MCF 10A (cell line): ENCODE measurements at regions of chr22 and their contacts with region 1.

Region 1: GRCh38 chr22:40177738-40178416 is at the start of gene TNRC6B:
- DNase-seq: peak; percentile 98
- H3K4me3 Mint-ChIP-seq: peak within 1 kb of the TSS; percentile 67
- H3K27ac Mint-ChIP-seq: peak within 1 kb of the TSS; percentile 80
- H3K4me1 Mint-ChIP-seq: peaks cover 35% of the 10 kb centered on the region
- H3K27me3 Mint-ChIP-seq: no peaks in the 10 kb centered on the region
- CTCF ChIP-seq: no peak
- total RNA-seq, gene TNRC6B: 27.1 and 39.3 TPM in 2 replicates

Region 2: GRCh38 chr22:40009292-40009769 is 168.5 kb before region 1 on chr22:
- CTCF ChIA-PET with region 1: no interaction called
- POLR2A ChIA-PET with region 1: no interaction called
- intact Hi-C with region 1: no loop called
- DNase-seq: no peak
- H3K4me3 Mint-ChIP-seq: peak overlapping the region; percentile 10
- H3K27ac Mint-ChIP-seq: peak overlapping the region; percentile 59
- H3K4me1 Mint-ChIP-seq: peaks cover 35% of the 10 kb centered on the region
- H3K27me3 Mint-ChIP-seq: no peaks in the 10 kb centered on the region
- CTCF ChIP-seq: no peak

Region 3: DNA sequence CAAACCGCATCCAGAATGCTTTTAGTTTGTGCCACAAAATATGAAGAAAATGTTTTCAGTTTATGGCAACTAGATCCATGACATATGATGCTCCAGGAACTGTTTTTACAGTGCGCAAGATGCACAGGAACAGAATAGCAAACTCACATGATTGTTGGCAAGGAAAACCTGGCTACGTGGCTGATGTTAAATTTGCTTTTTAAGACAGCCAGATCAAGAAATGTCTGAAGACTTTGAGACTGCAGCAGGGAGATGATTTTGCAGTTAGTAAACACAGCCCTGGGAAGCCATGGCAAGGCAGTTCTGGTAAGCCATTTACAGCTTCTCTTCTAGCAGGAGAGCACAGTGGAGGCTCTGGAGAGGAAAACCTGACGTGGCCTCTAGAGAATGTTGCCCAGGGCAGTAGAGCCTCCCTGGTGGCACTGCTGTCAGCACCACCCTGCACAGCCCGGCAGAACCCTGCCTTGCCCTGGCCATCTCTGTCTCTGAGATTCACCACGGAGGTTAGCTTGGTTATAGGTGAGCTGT is 70.0 kb before region 1 on chr22:
- CTCF ChIA-PET with region 1: no interaction called
- POLR2A ChIA-PET with region 1: interaction called, 32 read pairs
- intact Hi-C with region 1: no loop called
- DNase-seq: peak; percentile 36
- H3K4me3 Mint-ChIP-seq: peak overlapping the region; percentile 56
- H3K27ac Mint-ChIP-seq: peak overlapping the region; percentile 39
- H3K4me1 Mint-ChIP-seq: peaks cover 21% of the 10 kb centered on the region
- H3K27me3 Mint-ChIP-seq: no peaks in the 10 kb centered on the region
- CTCF ChIP-seq: no peak

Region 4: DNA sequence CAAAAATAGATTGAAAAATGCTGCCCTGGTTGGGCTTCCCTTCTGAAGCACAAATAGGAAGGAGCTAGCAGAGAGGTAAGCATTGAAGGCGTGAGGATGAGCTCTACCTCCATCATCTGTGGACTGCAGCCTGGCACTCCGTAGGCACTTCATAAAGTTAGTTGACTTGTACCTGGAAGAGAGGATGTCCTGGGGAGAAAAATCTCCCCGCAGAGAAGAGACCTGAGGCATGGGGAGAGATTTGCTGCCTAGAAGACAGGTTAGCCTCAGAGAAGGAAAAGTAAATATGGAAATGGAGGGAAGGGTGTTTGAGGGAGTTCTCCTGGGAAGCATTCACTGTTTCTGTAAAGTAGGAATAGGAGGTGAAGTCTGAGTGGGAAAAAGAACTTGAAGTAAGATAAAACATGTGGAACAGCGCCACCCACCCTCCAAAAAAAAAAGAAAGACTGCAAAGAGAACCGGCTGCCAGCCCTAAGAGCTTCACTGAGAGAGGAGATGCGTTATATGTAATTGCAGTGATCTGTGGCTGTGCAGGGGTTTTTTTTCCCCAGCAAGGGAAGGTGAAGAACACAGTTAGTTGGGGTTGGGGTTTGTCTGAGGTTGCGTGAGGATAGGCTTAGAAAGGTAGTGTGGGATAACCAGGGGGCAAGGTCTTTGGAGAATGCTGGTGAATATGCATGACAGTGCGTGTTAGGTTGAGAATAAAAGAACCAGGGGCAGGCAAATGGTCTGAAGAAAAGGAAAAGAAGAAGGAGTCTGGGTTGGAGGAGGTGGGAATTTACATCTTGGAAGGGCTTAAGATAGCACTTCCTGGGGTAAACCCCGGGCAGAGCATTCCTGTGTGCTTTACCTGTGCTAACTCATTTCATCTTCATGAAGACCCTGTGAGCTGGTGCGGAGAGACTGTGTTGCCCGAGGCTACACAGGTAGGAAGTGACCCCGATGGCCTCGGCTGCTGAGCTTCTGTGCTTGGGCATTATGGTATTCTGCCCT is 15.8 kb after region 1 on chr22:
- CTCF ChIA-PET with region 1: interaction called, 6 read pairs
- POLR2A ChIA-PET with region 1: interaction called, 64 read pairs
- intact Hi-C with region 1: no loop called
- DNase-seq: peak; percentile 15
- H3K4me3 Mint-ChIP-seq: no peak overlapping the region
- H3K27ac Mint-ChIP-seq: peak overlapping the region; percentile 11
- H3K4me1 Mint-ChIP-seq: peaks cover 46% of the 10 kb centered on the region
- H3K27me3 Mint-ChIP-seq: no peaks in the 10 kb centered on the region
- CTCF ChIP-seq: peak; percentile 24

Region 5: DNA sequence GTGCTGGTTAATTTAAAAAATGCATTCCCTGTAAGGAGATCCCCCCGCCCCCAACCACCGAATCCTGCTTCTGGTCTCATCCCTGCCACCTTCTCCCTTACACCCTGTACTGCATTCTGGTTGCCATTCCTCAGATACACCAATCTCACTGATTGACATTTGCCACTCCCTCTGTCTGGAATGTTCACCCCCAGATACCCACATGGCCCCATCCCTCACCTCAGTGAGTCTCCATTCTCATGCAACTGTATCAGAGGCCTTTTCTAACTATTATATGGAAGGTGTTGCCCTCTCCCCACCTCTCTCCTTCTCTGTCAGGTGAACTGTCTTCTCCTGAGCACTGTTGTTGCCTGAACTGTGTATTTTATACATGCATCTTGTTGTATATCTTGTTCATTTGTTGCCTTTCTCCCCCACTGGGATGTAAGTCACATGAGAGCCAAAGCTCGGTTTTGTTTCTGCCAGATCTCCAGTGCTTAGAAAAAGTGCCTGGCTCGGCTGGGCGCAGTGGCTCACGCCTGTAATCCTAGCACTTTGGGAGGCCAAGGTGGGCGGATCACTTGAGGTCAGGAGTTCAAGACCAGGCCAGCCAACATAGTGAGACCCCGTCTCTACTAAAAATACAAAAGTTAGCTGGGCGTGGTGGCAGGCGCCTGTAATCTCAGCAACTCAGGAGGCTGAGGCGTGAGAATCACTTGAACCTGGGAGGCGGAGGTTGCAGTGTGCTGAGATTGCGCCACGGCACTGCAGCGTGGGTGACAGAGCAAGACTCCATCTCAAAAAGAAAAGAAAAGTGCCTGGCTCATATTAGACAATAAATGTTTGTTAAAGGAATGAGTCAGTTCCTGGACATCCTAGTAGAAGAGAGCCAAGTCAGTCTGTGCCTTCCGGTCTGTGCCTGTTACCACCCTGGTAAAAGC is 60.8 kb after region 1 on chr22:
- CTCF ChIA-PET with region 1: no interaction called
- POLR2A ChIA-PET with region 1: interaction called, 15 read pairs
- intact Hi-C with region 1: loop called (anchors 5 kb)
- DNase-seq: peak; percentile 89
- H3K4me3 Mint-ChIP-seq: peak overlapping the region; percentile 50
- H3K27ac Mint-ChIP-seq: peak overlapping the region; percentile 24
- H3K4me1 Mint-ChIP-seq: peaks cover 61% of the 10 kb centered on the region
- H3K27me3 Mint-ChIP-seq: no peaks in the 10 kb centered on the region
- CTCF ChIP-seq: no peak

Region 6: GRCh38 chr22:40276996-40277823 is 99.3 kb after region 1 on chr22:
- CTCF ChIA-PET with region 1: interaction called, 4 read pairs
- POLR2A ChIA-PET with region 1: interaction called, 13 read pairs
- intact Hi-C with region 1: loop called (anchors 5 kb)
- DNase-seq: peak; percentile 43
- H3K4me3 Mint-ChIP-seq: peak overlapping the region; percentile 74
- H3K27ac Mint-ChIP-seq: peak overlapping the region; percentile 95
- H3K4me1 Mint-ChIP-seq: peaks cover 23% of the 10 kb centered on the region
- H3K27me3 Mint-ChIP-seq: no peaks in the 10 kb centered on the region
- CTCF ChIP-seq: no peak

Region 7: DNA sequence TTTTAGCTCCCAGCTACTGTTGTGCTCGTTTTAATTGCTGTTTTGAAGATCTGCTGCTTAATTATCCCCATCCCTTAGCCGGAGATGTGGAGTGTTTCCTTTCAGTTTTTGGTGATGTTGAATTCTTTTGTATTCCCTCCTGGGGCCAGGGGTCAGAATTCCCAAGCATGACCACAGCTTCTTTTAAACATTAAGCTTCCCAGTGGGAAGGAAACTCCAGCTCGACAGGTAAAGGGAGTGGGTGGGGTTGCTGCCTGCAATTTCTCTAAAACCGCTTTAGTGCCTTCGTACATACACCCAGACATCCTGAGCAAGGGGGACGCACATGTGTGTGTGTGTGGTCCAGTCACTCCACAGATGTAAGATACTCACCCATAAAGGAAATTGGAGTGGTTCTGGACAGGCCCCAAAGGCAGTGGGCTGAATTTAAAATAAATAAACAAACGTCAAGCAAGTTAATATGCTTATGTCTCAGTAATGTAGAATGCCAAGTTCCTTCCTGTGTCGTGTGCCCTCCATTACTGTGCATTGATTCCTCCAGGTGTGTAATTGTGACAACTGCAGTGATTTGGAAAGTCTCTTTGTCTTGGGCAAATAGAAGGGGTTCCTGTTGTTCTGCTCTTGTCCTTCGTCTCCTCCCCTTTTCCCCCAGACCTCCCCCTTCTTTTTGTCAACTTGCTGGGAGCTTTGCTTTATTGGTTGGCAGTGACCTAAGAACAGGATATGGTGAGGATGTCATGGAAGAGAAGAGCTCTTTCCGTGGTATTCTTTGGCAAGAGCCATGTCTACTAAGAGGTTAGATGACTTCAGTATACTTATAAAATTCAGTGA is 149.2 kb after region 1 on chr22:
- CTCF ChIA-PET with region 1: no interaction called
- POLR2A ChIA-PET with region 1: no interaction called
- intact Hi-C with region 1: no loop called
- DNase-seq: no peak
- H3K4me3 Mint-ChIP-seq: no peak overlapping the region
- H3K27ac Mint-ChIP-seq: no peak overlapping the region
- H3K4me1 Mint-ChIP-seq: no peaks in the 10 kb centered on the region
- H3K27me3 Mint-ChIP-seq: no peaks in the 10 kb centered on the region
- CTCF ChIP-seq: no peak